ENCODE measurements at regions of chr20 and their contacts with region 1.

Region 1: DNA sequence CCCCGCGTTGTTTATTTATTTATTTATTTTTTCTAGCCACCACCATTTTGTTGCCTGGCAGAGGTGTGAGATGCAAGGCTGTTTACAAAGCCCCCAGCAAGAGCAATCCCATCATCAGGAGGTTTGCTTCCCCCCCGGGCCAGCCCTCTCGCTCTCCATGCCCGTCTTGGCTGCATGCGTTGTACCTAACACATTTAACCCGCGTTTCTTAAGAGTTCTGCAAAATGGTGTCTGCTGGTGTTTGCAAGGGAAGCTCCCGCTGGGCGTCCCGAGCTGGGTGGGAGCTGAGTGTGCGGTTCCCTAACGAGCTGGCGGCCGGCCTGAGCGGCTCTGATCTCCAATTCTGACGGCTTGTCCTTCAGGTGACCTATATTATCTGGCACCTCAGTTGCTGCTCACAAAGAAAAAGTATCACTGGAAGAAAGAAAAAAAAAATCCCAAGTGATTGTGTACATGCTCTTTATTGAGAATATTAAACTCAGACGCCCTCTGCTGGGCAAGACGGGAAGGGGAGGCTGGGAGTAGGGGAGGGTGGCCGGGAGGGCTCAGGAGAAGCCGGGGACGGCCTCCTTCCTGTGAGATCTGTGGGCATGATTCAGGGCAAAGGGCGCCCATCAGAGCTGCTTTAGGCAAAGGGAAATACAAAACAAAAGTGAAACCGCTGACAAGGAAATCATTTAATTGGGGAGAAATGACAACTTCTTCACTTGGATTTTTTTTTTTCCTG is 154.8 kb downstream of the BCAS1 start:
- DNase-seq: peak; percentile 87 to 98 (median 95)
- ATAC-seq: peak; percentile 98
- H3K4me3 ChIP-seq: peak overlapping the region; percentile 76 to 81
- H3K4me3 Mint-ChIP-seq: peak overlapping the region; percentile 94
- H3K27ac ChIP-seq: peak overlapping the region; percentile 38 to 64
- H3K27ac Mint-ChIP-seq: peak overlapping the region; percentile 92
- H3K4me1 ChIP-seq: peaks cover 21% of the 10 kb centered on the region
- H3K4me1 Mint-ChIP-seq: peaks cover 26% of the 10 kb centered on the region
- H3K27me3 ChIP-seq: no peaks in the 10 kb centered on the region
- H3K27me3 Mint-ChIP-seq: no peaks in the 10 kb centered on the region
- CTCF ChIP-seq: peak; percentile 85

Region 2: DNA sequence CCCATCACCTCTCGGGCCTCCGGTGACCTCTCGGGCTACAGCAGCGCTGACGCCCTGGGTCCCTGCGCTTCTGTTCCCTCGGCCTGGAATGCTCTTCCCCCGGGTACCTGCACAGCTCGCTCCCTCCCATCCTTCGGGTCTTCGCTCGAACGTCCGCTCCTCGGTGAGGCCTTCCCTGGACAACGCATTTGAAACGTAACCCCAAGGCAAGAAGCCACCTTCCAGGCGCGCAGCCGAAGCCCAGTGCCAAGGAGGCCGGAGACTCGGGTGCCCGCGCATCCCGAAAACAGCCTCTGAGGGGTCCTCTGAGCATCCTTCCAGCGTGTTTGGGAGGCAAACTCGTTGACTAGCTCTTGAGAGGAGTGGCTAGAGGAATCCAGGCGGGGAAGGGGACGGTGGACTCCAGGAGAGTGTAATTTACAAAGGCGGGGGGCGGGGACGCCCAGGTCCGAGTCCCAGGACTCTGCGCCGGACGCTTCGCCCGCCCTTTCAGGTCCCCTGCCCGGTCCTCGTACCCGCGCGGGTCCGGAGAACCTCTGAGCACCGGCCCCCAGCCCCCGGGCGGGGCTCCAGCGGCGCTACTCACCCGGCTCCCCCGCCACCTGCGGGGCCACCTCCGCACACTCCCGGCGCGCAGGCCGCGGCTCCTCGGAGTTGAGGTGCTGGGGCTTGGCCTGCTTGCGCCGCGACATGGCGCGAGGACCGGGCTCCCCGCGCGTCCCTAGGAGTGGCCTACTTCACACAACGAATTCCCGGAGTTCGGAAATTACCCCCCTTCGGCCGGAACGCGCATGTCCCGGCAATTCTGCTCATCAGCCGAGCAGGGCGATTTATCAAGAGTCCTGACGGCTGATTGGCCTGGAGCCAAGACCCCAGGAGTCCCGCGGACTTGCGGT is 1810.8 kb before region 1 on chr20:
- CTCF ChIA-PET with region 1: no interaction called
- POLR2A ChIA-PET with region 1: no interaction called
- intact Hi-C with region 1: no loop called
- DNase-seq: peak in 1 of 9 experiments; percentile 15
- ATAC-seq: no peak
- H3K4me3 ChIP-seq: peak overlapping the region; percentile 29 to 47
- H3K4me3 Mint-ChIP-seq: peak overlapping the region; percentile 76
- H3K27ac ChIP-seq: no peak overlapping the region
- H3K27ac Mint-ChIP-seq: no peak overlapping the region
- H3K4me1 ChIP-seq: peaks cover 30% of the 10 kb centered on the region
- H3K4me1 Mint-ChIP-seq: peaks cover 23% of the 10 kb centered on the region
- H3K27me3 ChIP-seq: peaks cover 19 to 25% of the 10 kb centered on the region in 2 experiments
- H3K27me3 Mint-ChIP-seq: peaks cover 32% of the 10 kb centered on the region
- CTCF ChIP-seq: no peak

Region 3: DNA sequence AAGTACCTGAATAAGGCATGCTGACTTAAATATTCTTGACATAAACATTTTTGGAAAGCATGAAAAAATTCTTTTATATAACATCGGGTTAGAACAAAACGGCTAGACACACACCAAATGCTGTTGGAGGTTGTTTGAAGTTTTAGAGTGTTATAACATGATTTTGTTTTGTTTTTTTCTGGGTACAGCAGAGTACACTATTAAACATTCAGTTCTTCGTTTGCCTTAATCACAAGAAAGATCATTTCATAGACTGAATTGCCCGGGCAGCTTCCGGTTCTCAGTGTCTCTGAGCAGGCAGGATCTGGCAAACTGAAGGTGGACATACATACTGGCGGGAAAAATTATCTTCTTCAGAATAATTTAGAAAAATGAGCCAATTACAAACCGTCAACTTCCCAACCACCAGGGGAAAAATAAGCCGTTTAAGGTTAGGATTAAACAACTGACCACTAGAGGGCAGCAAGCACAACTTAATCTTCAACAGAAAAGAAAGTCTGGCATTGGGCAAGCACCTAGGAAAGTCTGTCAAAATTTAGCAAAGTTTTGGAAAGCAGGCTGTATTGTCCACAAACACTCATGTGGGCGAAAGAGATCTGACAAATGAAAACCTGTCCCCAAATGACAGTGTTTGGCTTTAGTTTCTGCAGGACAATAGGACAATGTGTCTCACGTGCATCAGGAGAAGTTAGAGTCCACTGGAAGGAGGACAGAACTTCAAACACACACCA is 337.0 kb before region 1 on chr20:
- CTCF ChIA-PET with region 1: interaction called, 107 read pairs
- POLR2A ChIA-PET with region 1: interaction called, 16 read pairs
- intact Hi-C with region 1: loop called (anchors 1 kb)
- DNase-seq: peak in 8 of 9 experiments; percentile 39 to 92 (median 63)
- ATAC-seq: peak; percentile 32
- H3K4me3 ChIP-seq: peak overlapping the region; percentile 50 to 58
- H3K4me3 Mint-ChIP-seq: peak overlapping the region; percentile 87
- H3K27ac ChIP-seq: peak overlapping the region; percentile 46 to 83
- H3K27ac Mint-ChIP-seq: peak overlapping the region; percentile 94
- H3K4me1 ChIP-seq: peaks cover 86% of the 10 kb centered on the region
- H3K4me1 Mint-ChIP-seq: peaks cover 89% of the 10 kb centered on the region
- H3K27me3 ChIP-seq: no peaks in the 10 kb centered on the region
- H3K27me3 Mint-ChIP-seq: no peaks in the 10 kb centered on the region
- CTCF ChIP-seq: peak; percentile 95

Region 4: DNA sequence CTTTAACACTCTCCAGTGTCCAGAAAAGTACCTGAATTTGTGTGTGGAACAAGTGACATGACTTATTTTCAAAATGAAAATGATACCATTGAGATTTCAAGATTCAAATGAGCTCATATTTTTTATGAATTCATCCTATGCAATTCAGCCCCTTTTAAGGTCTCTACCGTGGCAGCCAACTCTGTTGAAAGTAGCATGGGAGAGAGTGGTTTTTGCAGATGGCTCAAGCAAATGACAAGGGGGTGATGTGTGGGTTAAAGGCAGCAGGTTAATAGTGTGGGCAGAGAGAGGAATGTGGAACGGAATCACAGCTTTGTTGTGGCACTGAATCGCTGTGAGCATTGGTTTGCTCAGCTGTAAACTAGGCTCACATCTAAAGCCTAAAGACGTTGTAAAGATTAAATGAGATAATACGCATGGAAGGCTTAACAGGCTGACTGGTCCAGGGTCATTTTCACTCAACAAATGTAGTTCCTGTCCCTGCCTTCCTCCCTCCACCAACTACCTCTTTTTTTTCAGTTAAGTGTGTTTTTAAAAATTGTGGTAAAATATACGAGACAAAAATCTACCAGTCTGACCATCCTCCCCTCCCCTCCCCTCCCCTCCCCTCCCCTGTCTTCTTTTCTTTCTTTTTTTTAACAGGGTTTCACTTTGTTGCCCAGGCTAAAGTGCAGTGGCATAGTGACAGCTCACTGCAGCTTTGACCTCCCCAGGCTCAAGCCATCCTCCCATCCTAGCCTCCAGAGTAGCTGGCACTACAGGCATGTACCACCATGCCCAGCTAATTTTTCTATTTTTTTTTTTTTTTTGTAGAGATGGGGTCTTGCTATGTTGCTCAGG is 207.3 kb before region 1 on chr20:
- CTCF ChIA-PET with region 1: interaction called, 4 read pairs
- POLR2A ChIA-PET with region 1: no interaction called
- intact Hi-C with region 1: loop called in 1 of 2 experiments (anchors 5 kb)
- DNase-seq: peak in 4 of 9 experiments; percentile 13 to 58 (median 25)
- ATAC-seq: peak; percentile 48
- H3K4me3 ChIP-seq: no peak overlapping the region
- H3K4me3 Mint-ChIP-seq: peak overlapping the region; percentile 48
- H3K27ac ChIP-seq: peak overlapping the region; percentile 29 to 44
- H3K27ac Mint-ChIP-seq: peak overlapping the region; percentile 93
- H3K4me1 ChIP-seq: peaks cover 58% of the 10 kb centered on the region
- H3K4me1 Mint-ChIP-seq: peaks cover 55% of the 10 kb centered on the region
- H3K27me3 ChIP-seq: no peaks in the 10 kb centered on the region
- H3K27me3 Mint-ChIP-seq: no peaks in the 10 kb centered on the region
- CTCF ChIP-seq: no peak

Region 5: DNA sequence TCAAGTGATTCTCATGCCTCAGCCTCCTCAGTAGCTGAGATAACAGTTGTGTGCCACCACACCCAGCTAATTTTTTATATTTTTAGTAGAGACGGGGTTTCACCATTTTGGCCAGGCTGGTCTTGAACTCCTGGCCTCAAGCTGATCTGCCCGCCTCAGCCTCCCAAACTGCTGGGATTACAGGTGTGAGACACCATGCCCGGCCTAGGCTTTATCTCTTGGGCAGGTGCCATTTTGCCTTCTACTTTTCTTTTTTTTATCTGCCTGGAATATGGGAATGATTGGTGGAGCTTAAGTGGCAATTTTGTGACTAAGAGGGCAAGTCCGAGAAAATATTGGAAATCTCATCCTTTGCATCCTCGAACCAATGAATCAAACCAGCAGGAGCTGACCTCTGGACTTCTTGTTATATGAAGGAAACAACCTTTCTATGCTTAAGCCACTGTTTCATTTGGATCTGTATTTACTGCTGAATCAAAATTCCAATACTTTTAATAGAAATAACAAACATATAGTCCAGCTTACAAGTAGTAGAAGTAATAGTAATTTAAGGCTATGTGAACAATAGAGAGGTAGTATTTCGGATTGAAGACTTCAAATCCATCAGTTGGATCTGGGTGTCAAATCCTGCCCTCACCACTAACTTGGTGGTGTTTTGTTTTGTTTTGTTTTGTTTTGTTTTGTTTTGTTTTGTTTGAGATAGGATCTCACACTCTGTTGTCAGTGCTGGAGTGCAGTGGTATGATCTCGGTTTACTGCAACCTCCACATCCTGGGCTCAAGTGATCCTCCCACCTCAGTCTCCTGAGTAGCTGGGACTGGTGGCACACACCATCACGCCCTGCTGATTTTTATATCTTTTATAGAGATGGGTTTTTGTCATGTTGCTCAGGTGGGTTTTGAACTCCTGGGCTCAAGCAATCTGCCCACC is 192.8 kb before region 1 on chr20:
- CTCF ChIA-PET with region 1: no interaction called
- POLR2A ChIA-PET with region 1: no interaction called
- intact Hi-C with region 1: no loop called
- DNase-seq: no peak
- ATAC-seq: no peak
- H3K4me3 ChIP-seq: no peak overlapping the region
- H3K4me3 Mint-ChIP-seq: no peak overlapping the region
- H3K27ac ChIP-seq: no peak overlapping the region
- H3K27ac Mint-ChIP-seq: no peak overlapping the region
- H3K4me1 ChIP-seq: peaks cover 7% of the 10 kb centered on the region
- H3K4me1 Mint-ChIP-seq: peaks cover 7% of the 10 kb centered on the region
- H3K27me3 ChIP-seq: no peaks in the 10 kb centered on the region
- H3K27me3 Mint-ChIP-seq: no peaks in the 10 kb centered on the region
- CTCF ChIP-seq: no peak

Region 6: GRCh38 chr20:53847129-53847836 is 68.3 kb before region 1 on chr20:
- CTCF ChIA-PET with region 1: interaction called, 13 read pairs
- POLR2A ChIA-PET with region 1: no interaction called
- intact Hi-C with region 1: no loop called
- DNase-seq: peak in 2 of 9 experiments; percentile 41 to 69
- ATAC-seq: no peak
- H3K4me3 ChIP-seq: peak overlapping the region; percentile 16 to 30
- H3K4me3 Mint-ChIP-seq: peak overlapping the region; percentile 72
- H3K27ac ChIP-seq: peak overlapping the region in 1 of 2 experiments; percentile 29
- H3K27ac Mint-ChIP-seq: peak overlapping the region; percentile 84
- H3K4me1 ChIP-seq: peaks cover 64% of the 10 kb centered on the region
- H3K4me1 Mint-ChIP-seq: peaks cover 62% of the 10 kb centered on the region
- H3K27me3 ChIP-seq: no peaks in the 10 kb centered on the region
- H3K27me3 Mint-ChIP-seq: no peaks in the 10 kb centered on the region
- CTCF ChIP-seq: no peak

Region 7: GRCh38 chr20:53899351-53900167 is 16.1 kb before region 1 on chr20:
- CTCF ChIA-PET with region 1: interaction called, 61 read pairs
- POLR2A ChIA-PET with region 1: interaction called, 3 read pairs
- intact Hi-C with region 1: loop called in 1 of 2 experiments (anchors 2 kb)
- DNase-seq: peak; percentile 32 to 84 (median 70)
- ATAC-seq: peak; percentile 91
- H3K4me3 ChIP-seq: peak overlapping the region in 1 of 2 experiments; percentile 9
- H3K4me3 Mint-ChIP-seq: peak overlapping the region; percentile 36
- H3K27ac ChIP-seq: peak overlapping the region; percentile 14 to 51
- H3K27ac Mint-ChIP-seq: peak overlapping the region; percentile 91
- H3K4me1 ChIP-seq: peaks cover 43% of the 10 kb centered on the region
- H3K4me1 Mint-ChIP-seq: peaks cover 55% of the 10 kb centered on the region
- H3K27me3 ChIP-seq: no peaks in the 10 kb centered on the region
- H3K27me3 Mint-ChIP-seq: no peaks in the 10 kb centered on the region
- CTCF ChIP-seq: no peak

Region 8: DNA sequence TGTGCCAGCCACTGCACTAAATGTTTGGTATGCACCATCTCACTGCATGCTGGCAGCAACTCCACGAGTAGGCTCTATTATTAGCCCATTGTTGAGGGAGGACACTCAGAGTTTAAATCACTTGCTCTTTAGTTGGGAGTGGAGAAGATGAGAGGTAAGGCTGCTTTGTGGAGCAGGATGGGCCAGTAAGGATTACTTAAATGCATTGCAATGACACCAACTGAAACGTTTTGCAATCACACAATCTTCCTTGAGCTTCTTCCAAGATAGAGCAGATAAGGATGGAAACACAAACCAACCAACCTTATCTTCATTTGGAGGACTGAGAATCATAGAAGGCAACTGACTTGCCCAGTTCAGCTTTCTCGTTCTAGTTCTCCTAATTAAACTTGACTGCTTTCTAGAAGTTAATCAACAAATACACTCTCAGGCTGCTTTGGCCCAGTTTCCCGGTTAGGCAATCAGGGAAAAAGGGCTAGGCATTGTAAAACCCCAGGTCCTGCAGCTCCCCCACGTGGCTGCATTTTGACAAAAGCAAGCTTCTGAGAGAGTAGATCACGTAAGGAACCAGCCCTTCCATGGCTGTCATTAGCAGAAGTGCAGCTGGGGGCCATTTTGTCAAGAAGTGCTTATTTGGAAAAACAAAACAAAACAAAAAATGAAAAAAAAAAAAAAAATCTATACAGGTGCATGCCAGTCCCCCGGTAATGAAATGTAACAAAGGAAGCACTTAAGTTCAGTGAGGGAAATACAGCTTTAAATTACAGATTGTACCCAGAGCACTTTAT is 24.2 kb after region 1 on chr20:
- CTCF ChIA-PET with region 1: interaction called, 43 read pairs
- POLR2A ChIA-PET with region 1: interaction called, 10 read pairs
- intact Hi-C with region 1: loop called in 1 of 2 experiments (anchors 2 kb)
- DNase-seq: peak; percentile 38 to 83 (median 67)
- ATAC-seq: peak; percentile 76
- H3K4me3 ChIP-seq: no peak overlapping the region
- H3K4me3 Mint-ChIP-seq: no peak overlapping the region
- H3K27ac ChIP-seq: no peak overlapping the region
- H3K27ac Mint-ChIP-seq: no peak overlapping the region
- H3K4me1 ChIP-seq: peaks cover 31% of the 10 kb centered on the region
- H3K4me1 Mint-ChIP-seq: peaks cover 43% of the 10 kb centered on the region
- H3K27me3 ChIP-seq: no peaks in the 10 kb centered on the region
- H3K27me3 Mint-ChIP-seq: no peaks in the 10 kb centered on the region
- CTCF ChIP-seq: peak; percentile 75

Measured in CD8-positive, alpha-beta T cell (primary cell).